Mammary epithelial cell (primary cell): ENCODE measurements at regions of chr1 and their contacts with region 1.

Region 1: GRCh38 chr1:156465747-156466365 is 34.7 kb downstream of the MEF2D start:
- DNase-seq: no peak
- H3K4me3 ChIP-seq: no peak overlapping the region
- H3K27ac ChIP-seq: no peak overlapping the region
- H3K4me1 ChIP-seq: peaks cover 6% of the 10 kb centered on the region
- H3K27me3 ChIP-seq: no peaks in the 10 kb centered on the region
- CTCF ChIP-seq: peak in 1 of 2 donors; percentile 13

Region 2: DNA sequence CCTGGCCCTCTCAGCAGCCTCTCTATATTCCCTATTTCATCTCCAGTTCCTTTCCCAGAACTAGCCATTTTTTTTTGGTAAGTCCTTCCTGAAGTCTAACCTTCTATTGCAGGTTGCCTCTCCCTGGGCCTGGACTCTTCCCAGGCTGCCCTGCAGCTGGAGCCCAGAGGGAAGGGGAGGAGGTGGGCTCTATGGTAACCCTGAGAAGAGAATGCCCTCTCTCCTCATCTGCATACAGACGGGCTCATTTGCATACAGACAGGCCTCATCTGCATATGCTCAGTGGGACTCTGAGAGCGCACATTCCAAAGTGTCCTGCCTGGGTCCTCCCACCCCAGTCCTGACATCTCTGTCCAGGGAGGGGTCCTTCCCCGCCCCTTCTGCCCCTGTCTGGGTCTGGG is 64.2 kb before region 1 on chr1:
- CTCF ChIA-PET with region 1: no interaction called
- dilution Hi-C with region 1: loop called (anchors 5 kb)
- in situ Hi-C with region 1: no loop called
- intact Hi-C with region 1: no loop called
- DNase-seq: no peak
- H3K4me3 ChIP-seq: no peak overlapping the region
- H3K27ac ChIP-seq: no peak overlapping the region
- H3K4me1 ChIP-seq: no peaks in the 10 kb centered on the region
- H3K27me3 ChIP-seq: peaks cover 2% of the 10 kb centered on the region
- CTCF ChIP-seq: no peak

Region 3: GRCh38 chr1:156524481-156524869 is 58.6 kb after region 1 on chr1:
- CTCF ChIA-PET with region 1: no interaction called
- dilution Hi-C with region 1: loop called (anchors 10 kb)
- in situ Hi-C with region 1: no loop called
- intact Hi-C with region 1: no loop called
- DNase-seq: no peak
- H3K4me3 ChIP-seq: no peak overlapping the region
- H3K27ac ChIP-seq: no peak overlapping the region
- H3K4me1 ChIP-seq: no peaks in the 10 kb centered on the region
- H3K27me3 ChIP-seq: no peaks in the 10 kb centered on the region
- CTCF ChIP-seq: no peak